Panc1 (cell line): ENCODE measurements at regions of chr6 and their contacts with region 1.

Region 1: DNA sequence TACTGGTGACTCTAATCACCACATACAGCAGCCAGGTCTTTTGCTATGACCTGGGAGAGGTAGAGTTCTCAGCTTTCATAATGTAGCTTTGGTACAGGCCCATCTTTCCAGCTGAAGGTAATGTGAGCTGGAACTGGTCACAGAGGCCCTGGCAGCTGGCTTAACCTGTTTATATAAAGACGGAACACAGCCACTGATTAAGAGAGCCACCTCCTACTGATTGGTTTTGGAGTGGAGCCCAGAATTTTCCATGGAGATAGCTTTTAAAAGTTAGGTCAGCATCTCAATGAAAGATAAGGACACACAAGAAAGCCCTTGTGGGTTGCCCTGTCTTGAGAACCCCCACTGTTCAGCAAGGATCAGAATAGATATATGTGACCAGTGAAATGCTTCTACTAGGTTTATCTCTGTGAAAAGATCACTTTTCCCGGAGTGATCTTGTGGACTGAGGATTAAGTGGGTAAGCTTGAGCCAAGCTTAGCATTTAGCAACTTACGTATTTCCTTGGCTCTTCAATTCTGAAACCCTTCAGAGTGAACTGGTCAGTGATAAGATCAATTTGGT is 213.7 kb upstream of the CITED2 start:
- DNase-seq: no peak
- ATAC-seq: peak; percentile 86
- H3K4me3 ChIP-seq: no peak overlapping the region
- H3K27ac ChIP-seq: peak overlapping the region; percentile 93
- H3K4me1 ChIP-seq: peaks cover 33% of the 10 kb centered on the region
- H3K27me3 ChIP-seq: no peaks in the 10 kb centered on the region
- CTCF ChIP-seq: no peak

Region 2: GRCh38 chr6:139764498-139764986 is 176.4 kb after region 1 on chr6:
- CTCF ChIA-PET with region 1: no interaction called
- POLR2A ChIA-PET with region 1: no interaction called
- in situ Hi-C with region 1: no loop called
- intact Hi-C with region 1: loop called (anchors 5 kb)
- DNase-seq: peak; percentile 96
- ATAC-seq: peak; percentile 93
- H3K4me3 ChIP-seq: no peak overlapping the region
- H3K27ac ChIP-seq: peak overlapping the region; percentile 86
- H3K4me1 ChIP-seq: peaks cover 43% of the 10 kb centered on the region
- H3K27me3 ChIP-seq: no peaks in the 10 kb centered on the region
- CTCF ChIP-seq: no peak